GM12878 (cell line): ENCODE measurements at regions of chr5 and their contacts with region 1.

Region 1: GRCh38 chr5:150778517-150779396 is at the start of gene SMIM3:
- DNase-seq: no peak
- ATAC-seq: peak; percentile 70
- H3K4me3 ChIP-seq: peak within 1 kb of the TSS; percentile 77
- H3K27ac ChIP-seq: peak within 1 kb of the TSS; percentile 78
- H3K4me1 ChIP-seq: peaks cover 30% of the 10 kb centered on the region
- H3K27me3 ChIP-seq: no peaks in the 10 kb centered on the region
- CTCF ChIP-seq: peak; percentile 45 to 75 (median 68)
- EP300 ChIP-seq: no peak
- POLR2A ChIP-seq: peak; percentile 58; the same call in 1 of the 2 replicates
- RAD21 ChIP-seq: peak; percentile 65
- polyA plus RNA-seq, gene SMIM3: 1.4 to 5.2 TPM

Region 2: GRCh38 chr5:150486402-150487198 is 292.2 kb before region 1 on chr5:
- CTCF ChIA-PET with region 1: no interaction called
- POLR2A ChIA-PET with region 1: no interaction called
- RAD21 ChIA-PET with region 1: no interaction called
- SMC1A ChIA-PET with region 1: no interaction called
- in situ Hi-C with region 1: no loop called
- intact Hi-C with region 1: loop called (anchors 10 kb)
- DNase-seq: no peak
- ATAC-seq: peak; percentile 35
- H3K4me3 ChIP-seq: peak overlapping the region; percentile 88
- H3K27ac ChIP-seq: peak overlapping the region; percentile 72
- H3K4me1 ChIP-seq: peaks cover 47% of the 10 kb centered on the region
- H3K27me3 ChIP-seq: no peaks in the 10 kb centered on the region
- CTCF ChIP-seq: no peak; a peak in 1 of 6 replicates
- EP300 ChIP-seq: no peak
- POLR2A ChIP-seq: no peak
- RAD21 ChIP-seq: no peak

Region 3: GRCh38 chr5:150700594-150701293 is 78.0 kb before region 1 on chr5 and contains the start of gene RBM22:
- CTCF ChIA-PET with region 1: interaction called, 12 read pairs
- POLR2A ChIA-PET with region 1: no interaction called
- RAD21 ChIA-PET with region 1: interaction called, 4 read pairs
- SMC1A ChIA-PET with region 1: interaction called, 3 read pairs
- in situ Hi-C with region 1: no loop called
- intact Hi-C with region 1: loop called (anchors 2 kb)
- DNase-seq: peak; percentile 57
- ATAC-seq: peak; percentile 98
- H3K4me3 ChIP-seq: peak within 1 kb of the TSS; percentile 91
- H3K27ac ChIP-seq: peak within 1 kb of the TSS; percentile 87
- H3K4me1 ChIP-seq: no peaks in the 10 kb centered on the region
- H3K27me3 ChIP-seq: no peaks in the 10 kb centered on the region
- CTCF ChIP-seq: peak; percentile 57 to 70 (median 60)
- EP300 ChIP-seq: peak in 1 of 2 experiments; percentile 22; a peak in 1 of 4 replicates
- POLR2A ChIP-seq: peak; percentile 93
- RAD21 ChIP-seq: peak; percentile 29; the same call in 1 of the 2 replicates
- polyA plus RNA-seq, gene RBM22: 26.3 to 40.3 TPM

Region 4: GRCh38 chr5:150734579-150735384 is 44.0 kb before region 1 on chr5:
- CTCF ChIA-PET with region 1: interaction called, 6 read pairs
- POLR2A ChIA-PET with region 1: no interaction called
- RAD21 ChIA-PET with region 1: no interaction called
- SMC1A ChIA-PET with region 1: interaction called, 4 read pairs
- in situ Hi-C with region 1: no loop called
- intact Hi-C with region 1: loop called (anchors 1 kb)
- DNase-seq: peak; percentile 53
- ATAC-seq: peak; percentile 96
- H3K4me3 ChIP-seq: no peak overlapping the region
- H3K27ac ChIP-seq: peak overlapping the region; percentile 67
- H3K4me1 ChIP-seq: peaks cover 14% of the 10 kb centered on the region
- H3K27me3 ChIP-seq: no peaks in the 10 kb centered on the region
- CTCF ChIP-seq: peak; percentile 10 to 21 (median 19); a peak in 3 of 6 replicates
- EP300 ChIP-seq: no peak
- POLR2A ChIP-seq: no peak
- RAD21 ChIP-seq: no peak

Region 5: GRCh38 chr5:150758531-150759333 is 20.0 kb before region 1 on chr5 and contains the start of gene DCTN4:
- CTCF ChIA-PET with region 1: interaction called, 5 read pairs
- POLR2A ChIA-PET with region 1: interaction called, 5 read pairs
- RAD21 ChIA-PET with region 1: interaction called, 4 read pairs
- SMC1A ChIA-PET with region 1: interaction called, 7 read pairs
- in situ Hi-C with region 1: no loop called
- intact Hi-C with region 1: loop called (anchors 2 kb)
- DNase-seq: peak; percentile 98
- ATAC-seq: peak; percentile 97
- H3K4me3 ChIP-seq: peak within 1 kb of the TSS; percentile 95
- H3K27ac ChIP-seq: peak within 1 kb of the TSS; percentile 95
- H3K4me1 ChIP-seq: peaks cover 4% of the 10 kb centered on the region; the same call in 1 of the 2 replicates
- H3K27me3 ChIP-seq: no peaks in the 10 kb centered on the region
- CTCF ChIP-seq: no peak
- EP300 ChIP-seq: no peak
- POLR2A ChIP-seq: peak; percentile 91
- RAD21 ChIP-seq: no peak
- polyA plus RNA-seq, gene DCTN4: 7.6 to 8.5 TPM

Region 6: GRCh38 chr5:150846654-150847333 is 68.0 kb after region 1 on chr5:
- CTCF ChIA-PET with region 1: interaction called, 4 read pairs
- POLR2A ChIA-PET with region 1: interaction called, 3 read pairs
- RAD21 ChIA-PET with region 1: interaction called, 4 read pairs
- SMC1A ChIA-PET with region 1: interaction called, 3 read pairs
- in situ Hi-C with region 1: no loop called
- intact Hi-C with region 1: loop called (anchors 1 kb)
- DNase-seq: peak; percentile 67
- ATAC-seq: peak; percentile 97
- H3K4me3 ChIP-seq: peak overlapping the region; percentile 32; the same call in 1 of the 2 replicates
- H3K27ac ChIP-seq: no peak overlapping the region
- H3K4me1 ChIP-seq: peaks cover 7% of the 10 kb centered on the region
- H3K27me3 ChIP-seq: no peaks in the 10 kb centered on the region
- CTCF ChIP-seq: peak; percentile 49 to 92 (median 72); a peak in 5 of 6 replicates
- EP300 ChIP-seq: peak in 1 of 2 experiments; percentile 38; a peak in 1 of 4 replicates
- POLR2A ChIP-seq: no peak
- RAD21 ChIP-seq: peak; percentile 95

Region 7: DNA sequence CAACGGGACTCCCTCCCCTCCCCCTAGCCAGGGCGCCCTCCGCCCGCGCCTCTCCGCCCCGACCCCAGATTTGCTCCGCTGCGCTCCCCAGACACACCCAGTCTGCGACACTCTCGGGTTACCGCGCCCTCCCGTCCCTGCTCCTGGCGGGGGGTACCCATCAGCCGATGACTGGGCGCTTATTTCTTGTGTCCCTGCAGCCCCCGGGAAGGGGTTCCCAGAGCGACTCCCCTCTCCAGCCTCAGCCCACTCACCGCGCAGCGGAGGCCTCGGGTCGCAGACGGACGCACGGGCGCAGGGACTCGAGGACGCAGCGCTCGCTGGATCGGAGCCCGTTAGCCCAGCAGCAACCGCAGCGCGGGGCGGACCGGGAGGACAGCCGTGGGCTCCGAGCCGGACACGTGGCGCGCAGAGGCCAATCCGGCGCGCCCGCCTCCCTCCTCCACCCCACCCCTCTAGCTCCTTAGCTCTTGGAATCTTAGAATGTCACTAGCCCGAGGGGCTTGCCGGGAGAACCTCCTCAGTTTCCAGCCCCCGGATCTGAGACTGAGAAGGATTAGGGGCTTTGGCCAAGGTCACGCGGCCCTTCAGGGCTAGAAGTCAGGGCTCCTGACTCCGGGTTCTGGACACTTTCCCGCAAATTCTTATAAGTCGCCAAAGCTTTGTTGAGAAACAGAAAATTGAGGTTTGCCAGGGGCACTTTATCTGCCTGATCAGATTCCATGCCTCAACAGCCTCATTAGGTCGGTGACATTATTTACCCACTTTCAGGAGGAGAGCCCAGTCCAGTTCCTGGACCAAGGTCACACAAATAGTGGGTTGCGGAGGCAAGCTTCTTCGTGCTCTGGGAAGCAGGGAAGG is 378.9 kb after region 1 on chr5 and contains the start of gene ANXA6:
- CTCF ChIA-PET with region 1: no interaction called
- POLR2A ChIA-PET with region 1: no interaction called
- RAD21 ChIA-PET with region 1: no interaction called
- SMC1A ChIA-PET with region 1: no interaction called
- in situ Hi-C with region 1: no loop called
- intact Hi-C with region 1: loop called (anchors 5 kb)
- DNase-seq: no peak
- ATAC-seq: peak; percentile 77
- H3K4me3 ChIP-seq: peak within 1 kb of the TSS; percentile 97
- H3K27ac ChIP-seq: peak within 1 kb of the TSS; percentile 89
- H3K4me1 ChIP-seq: peaks cover 26% of the 10 kb centered on the region
- H3K27me3 ChIP-seq: no peaks in the 10 kb centered on the region
- CTCF ChIP-seq: no peak
- EP300 ChIP-seq: no peak
- POLR2A ChIP-seq: peak; percentile 81
- RAD21 ChIP-seq: no peak
- polyA plus RNA-seq, gene ANXA6: 44.0 to 73.1 TPM